Naive thymus-derived CD4-positive, alpha-beta T cell (primary cell): ENCODE measurements at regions of chr10 and their contacts with region 1.

Region 1: DNA sequence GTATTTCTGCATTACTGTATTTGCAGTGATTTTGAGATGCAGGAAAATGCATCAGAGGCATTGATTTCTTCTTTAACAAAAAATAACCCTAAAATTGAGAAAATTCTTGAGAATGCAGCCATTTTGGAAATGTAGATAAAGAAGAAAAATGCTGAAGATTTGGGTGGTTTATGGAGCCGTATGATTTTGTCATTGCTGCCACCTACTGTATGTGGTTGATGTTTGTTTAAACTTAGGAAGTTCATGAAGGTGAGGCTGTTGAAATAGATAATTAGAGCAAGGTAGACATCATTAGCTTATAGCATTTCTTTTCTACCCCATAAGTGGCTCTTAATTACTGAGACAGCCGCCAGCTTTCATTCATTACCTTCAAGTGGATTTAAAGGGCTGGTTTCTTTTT is 92.1 kb upstream of the SAMD8 start:
- DNase-seq: peak in 7 of 9 donors; percentile 15 to 53 (median 43)
- ATAC-seq: peak; percentile 63
- H3K4me3 ChIP-seq: no peak overlapping the region
- H3K4me3 Mint-ChIP-seq: no peak overlapping the region
- H3K27ac ChIP-seq: no peak overlapping the region
- H3K27ac Mint-ChIP-seq: peak overlapping the region in 5 of 9 donors; percentile 4 to 62 (median 16)
- H3K4me1 ChIP-seq: peaks cover 8 to 12% of the 10 kb centered on the region in 2 donors
- H3K4me1 Mint-ChIP-seq: peaks cover 6 to 38% (median 23%) of the 10 kb centered on the region in 7 donors
- H3K27me3 ChIP-seq: no peaks in the 10 kb centered on the region
- H3K27me3 Mint-ChIP-seq: no peaks in the 10 kb centered on the region

Region 2: GRCh38 chr10:74262856-74263255 is 756.5 kb before region 1 on chr10:
- CTCF ChIA-PET with region 1: interaction called, 5 read pairs
- POLR2A ChIA-PET with region 1: no interaction called
- intact Hi-C with region 1: loop called (anchors 1 kb)
- DNase-seq: no peak
- ATAC-seq: no peak
- H3K4me3 ChIP-seq: no peak overlapping the region
- H3K4me3 Mint-ChIP-seq: no peak overlapping the region
- H3K27ac ChIP-seq: no peak overlapping the region
- H3K27ac Mint-ChIP-seq: peak overlapping the region in 1 of 9 donors; percentile 28
- H3K4me1 ChIP-seq: no peaks in the 10 kb centered on the region
- H3K4me1 Mint-ChIP-seq: peaks cover 4 to 24% (median 11%) of the 10 kb centered on the region in 7 donors
- H3K27me3 ChIP-seq: no peaks in the 10 kb centered on the region
- H3K27me3 Mint-ChIP-seq: no peaks in the 10 kb centered on the region

Region 3: DNA sequence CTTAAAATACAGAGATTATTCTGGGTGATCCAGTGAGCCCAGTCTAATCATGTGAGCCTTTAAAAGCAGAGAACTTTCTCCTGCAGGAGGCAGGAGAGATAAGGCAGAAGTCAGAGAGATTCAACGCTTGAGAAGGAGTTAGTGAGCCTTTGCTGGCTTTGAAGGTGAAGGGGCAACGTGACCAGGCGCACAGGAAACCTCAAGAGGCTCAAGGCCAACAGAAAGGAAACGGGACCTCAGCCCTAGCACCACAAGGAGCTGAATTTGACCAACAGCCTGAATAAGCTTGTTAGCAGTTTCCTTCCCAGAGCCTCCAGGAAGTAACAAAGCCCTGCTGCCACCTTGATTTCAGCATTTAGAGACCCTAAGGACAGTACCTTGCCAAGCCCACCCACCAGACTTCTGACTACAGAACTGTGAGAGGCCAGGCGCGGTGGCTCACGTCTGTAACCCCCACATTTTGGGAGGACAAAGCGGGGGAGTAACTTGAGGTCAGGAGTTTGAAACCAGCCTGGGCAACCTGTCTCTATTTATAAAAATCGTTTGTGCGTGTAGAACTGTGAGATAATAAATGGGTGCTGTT is 280.3 kb before region 1 on chr10:
- CTCF ChIA-PET with region 1: no interaction called
- POLR2A ChIA-PET with region 1: no interaction called
- intact Hi-C with region 1: loop called (anchors 1 to 2 kb)
- DNase-seq: peak in 7 of 9 donors; percentile 4 to 40 (median 17)
- ATAC-seq: peak; percentile 73
- H3K4me3 ChIP-seq: no peak overlapping the region
- H3K4me3 Mint-ChIP-seq: peak overlapping the region in 9 of 10 donors; percentile 17 to 56 (median 34)
- H3K27ac ChIP-seq: no peak overlapping the region
- H3K27ac Mint-ChIP-seq: peak overlapping the region; percentile 44 to 87 (median 58)
- H3K4me1 ChIP-seq: peaks cover 7 to 15% of the 10 kb centered on the region in 2 donors
- H3K4me1 Mint-ChIP-seq: peaks cover 15 to 26% (median 17%) of the 10 kb centered on the region in 7 donors
- H3K27me3 ChIP-seq: no peaks in the 10 kb centered on the region
- H3K27me3 Mint-ChIP-seq: no peaks in the 10 kb centered on the region

Region 4: DNA sequence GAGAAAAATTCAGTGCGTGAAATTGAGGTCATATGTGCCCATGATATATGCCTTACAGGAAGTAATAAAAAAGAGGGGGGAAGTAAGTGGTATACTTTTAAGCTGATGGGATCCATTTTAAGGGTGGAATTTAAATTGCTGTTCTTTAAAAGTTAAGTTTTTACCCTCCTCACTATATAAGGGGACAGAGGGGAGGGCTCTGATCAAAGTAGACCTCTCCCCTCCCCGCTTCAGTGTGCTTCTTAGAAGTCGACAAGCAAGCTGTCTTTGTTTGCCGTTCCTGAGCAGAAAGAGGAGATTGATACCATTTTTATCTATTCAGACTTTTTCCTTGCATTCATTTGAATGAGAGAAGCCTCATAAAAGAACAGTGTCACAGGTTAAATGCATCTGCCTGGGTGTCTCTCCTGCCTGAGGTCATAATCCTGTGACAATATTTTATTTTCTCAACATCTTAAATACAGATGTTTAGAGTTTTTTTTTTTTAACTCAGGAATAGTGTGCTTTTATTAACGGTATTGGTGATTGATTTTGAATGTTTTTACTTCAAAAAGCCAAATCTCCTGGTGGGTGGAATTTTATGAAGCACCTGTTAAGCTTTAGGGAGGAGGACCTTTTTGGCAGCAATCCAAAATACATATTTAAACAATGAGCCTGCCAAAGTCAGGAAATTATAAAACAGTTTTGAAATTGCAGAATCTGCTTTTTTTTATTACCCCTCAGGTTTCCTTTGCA is 51.3 kb before region 1 on chr10:
- CTCF ChIA-PET with region 1: no interaction called
- POLR2A ChIA-PET with region 1: no interaction called
- intact Hi-C with region 1: loop called in 1 of 2 experiments (anchors 2 kb)
- DNase-seq: peak in 7 of 9 donors; percentile 31 to 58 (median 49)
- ATAC-seq: peak; percentile 81
- H3K4me3 ChIP-seq: no peak overlapping the region
- H3K4me3 Mint-ChIP-seq: peak overlapping the region in 9 of 10 donors; percentile 66 to 81 (median 76)
- H3K27ac ChIP-seq: peak overlapping the region; percentile 70
- H3K27ac Mint-ChIP-seq: peak overlapping the region; percentile 7 to 97 (median 93)
- H3K4me1 ChIP-seq: peaks cover 6 to 15% of the 10 kb centered on the region in 2 donors
- H3K4me1 Mint-ChIP-seq: peaks cover 22 to 59% (median 54%) of the 10 kb centered on the region in 7 donors
- H3K27me3 ChIP-seq: no peaks in the 10 kb centered on the region
- H3K27me3 Mint-ChIP-seq: no peaks in the 10 kb centered on the region

Region 5: GRCh38 chr10:75099952-75100763 is 80.8 kb after region 1 on chr10:
- CTCF ChIA-PET with region 1: no interaction called
- POLR2A ChIA-PET with region 1: no interaction called
- intact Hi-C with region 1: loop called (anchors 1 to 2 kb)
- DNase-seq: peak; percentile 55 to 88 (median 70)
- ATAC-seq: peak; percentile 95
- H3K4me3 ChIP-seq: no peak overlapping the region
- H3K4me3 Mint-ChIP-seq: no peak overlapping the region
- H3K27ac ChIP-seq: no peak overlapping the region
- H3K27ac Mint-ChIP-seq: no peak overlapping the region
- H3K4me1 ChIP-seq: peaks cover 0 to 3% of the 10 kb centered on the region in 2 donors
- H3K4me1 Mint-ChIP-seq: peaks cover 0 to 7% (median 0%) of the 10 kb centered on the region in 7 donors
- H3K27me3 ChIP-seq: no peaks in the 10 kb centered on the region
- H3K27me3 Mint-ChIP-seq: no peaks in the 10 kb centered on the region